Calu3 (cell line): ENCODE measurements at regions of chr5 and their contacts with region 1.

Region 1: DNA sequence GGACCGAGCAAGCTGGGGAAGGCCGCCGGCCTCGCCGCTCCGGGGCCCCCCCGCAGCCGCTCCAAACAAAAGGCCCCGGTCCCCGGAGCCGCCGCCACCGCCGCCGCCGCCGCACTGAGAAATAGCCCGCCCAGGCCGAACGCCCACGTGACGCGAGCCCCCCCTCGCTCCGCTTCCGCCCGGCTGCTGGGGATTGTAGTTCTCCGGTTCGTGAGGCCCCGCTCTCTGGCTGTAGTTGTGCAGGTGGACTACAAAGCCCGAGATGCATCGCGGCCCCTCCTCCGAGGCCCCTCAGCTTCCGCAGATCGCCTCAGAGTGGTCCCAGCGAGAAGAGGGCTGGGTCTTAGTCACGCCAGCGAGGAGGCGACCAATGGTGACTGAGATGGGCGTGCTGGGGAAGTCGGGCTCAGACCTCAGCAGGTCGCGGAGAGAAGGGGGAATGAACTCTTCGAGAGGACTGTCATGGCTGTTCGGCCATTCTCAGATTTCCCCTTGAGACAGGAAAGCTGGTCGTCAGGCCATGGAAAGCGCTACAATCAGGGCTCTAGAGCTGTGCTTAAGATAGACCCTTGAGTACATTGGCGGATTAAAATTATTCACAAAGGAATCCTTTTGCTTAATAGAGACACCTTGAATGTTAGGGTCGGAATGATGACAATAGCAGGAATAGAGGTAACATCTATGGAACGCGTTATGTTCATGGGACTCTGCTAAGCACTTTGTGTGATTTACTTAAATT is 489 bp upstream of the PANK3 start:
- DNase-seq: peak; percentile 99
- H3K4me3 Mint-ChIP-seq: peak overlapping the region; percentile 78
- H3K27ac Mint-ChIP-seq: peak overlapping the region; percentile 94
- H3K4me1 Mint-ChIP-seq: peaks cover 36% of the 10 kb centered on the region
- H3K27me3 Mint-ChIP-seq: peaks cover under 1% of the 10 kb centered on the region
- CTCF ChIP-seq: no peak

Region 2: GRCh38 chr5:168390491-168390890 is 189.2 kb before region 1 on chr5:
- CTCF ChIA-PET with region 1: no interaction called
- intact Hi-C with region 1: no loop called
- DNase-seq: no peak
- H3K4me3 Mint-ChIP-seq: no peak overlapping the region
- H3K27ac Mint-ChIP-seq: peak overlapping the region; percentile 28
- H3K4me1 Mint-ChIP-seq: peaks cover 32% of the 10 kb centered on the region
- H3K27me3 Mint-ChIP-seq: no peaks in the 10 kb centered on the region
- CTCF ChIP-seq: no peak

Region 3: DNA sequence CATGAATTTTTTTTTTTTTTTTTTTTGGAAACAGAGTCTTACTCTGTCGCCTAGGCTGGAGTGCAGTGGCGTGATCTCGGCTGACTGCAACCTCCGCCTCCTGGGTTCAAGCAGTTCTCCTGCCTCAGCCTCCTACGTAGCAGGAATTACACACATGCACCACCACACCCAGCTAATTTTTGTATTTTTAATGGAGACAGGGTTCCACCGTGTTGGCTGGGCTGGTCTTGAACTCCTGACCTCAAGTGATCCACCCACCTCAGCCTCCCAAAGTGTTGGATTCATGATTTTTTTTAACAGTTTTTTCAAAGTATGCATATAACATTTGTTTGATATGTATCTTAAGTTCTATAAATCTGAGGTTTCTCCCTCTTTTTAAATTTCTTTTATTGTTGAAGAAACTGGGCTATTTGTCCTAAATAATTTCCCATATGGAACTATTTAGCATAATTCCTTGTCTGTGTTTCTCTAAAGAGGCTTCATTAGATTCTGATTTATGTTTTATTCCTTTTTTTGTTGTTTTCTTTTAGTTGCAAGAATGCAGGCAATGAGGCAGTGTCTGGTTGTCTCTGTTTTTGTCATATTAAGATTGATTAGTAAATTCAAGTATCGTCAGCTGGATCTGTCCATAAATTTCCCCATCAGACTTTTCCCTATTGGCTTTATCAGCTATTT is 77.0 kb before region 1 on chr5:
- CTCF ChIA-PET with region 1: no interaction called
- intact Hi-C with region 1: no loop called
- DNase-seq: no peak
- H3K4me3 Mint-ChIP-seq: no peak overlapping the region
- H3K27ac Mint-ChIP-seq: no peak overlapping the region
- H3K4me1 Mint-ChIP-seq: no peaks in the 10 kb centered on the region
- H3K27me3 Mint-ChIP-seq: no peaks in the 10 kb centered on the region
- CTCF ChIP-seq: no peak

Region 4: GRCh38 chr5:168562279-168562678 is 17.4 kb before region 1 on chr5:
- CTCF ChIA-PET with region 1: interaction called, 3 read pairs
- intact Hi-C with region 1: loop called (anchors 2 kb)
- DNase-seq: no peak
- H3K4me3 Mint-ChIP-seq: no peak overlapping the region
- H3K27ac Mint-ChIP-seq: no peak overlapping the region
- H3K4me1 Mint-ChIP-seq: peaks cover 17% of the 10 kb centered on the region
- H3K27me3 Mint-ChIP-seq: no peaks in the 10 kb centered on the region
- CTCF ChIP-seq: no peak

Region 5: GRCh38 chr5:168656633-168657032 is 77.0 kb after region 1 on chr5:
- CTCF ChIA-PET with region 1: no interaction called
- intact Hi-C with region 1: loop called (anchors 1 kb)
- DNase-seq: peak; percentile 8
- H3K4me3 Mint-ChIP-seq: no peak overlapping the region
- H3K27ac Mint-ChIP-seq: peak overlapping the region; percentile 79
- H3K4me1 Mint-ChIP-seq: peaks cover 40% of the 10 kb centered on the region
- H3K27me3 Mint-ChIP-seq: no peaks in the 10 kb centered on the region
- CTCF ChIP-seq: no peak

Region 6: DNA sequence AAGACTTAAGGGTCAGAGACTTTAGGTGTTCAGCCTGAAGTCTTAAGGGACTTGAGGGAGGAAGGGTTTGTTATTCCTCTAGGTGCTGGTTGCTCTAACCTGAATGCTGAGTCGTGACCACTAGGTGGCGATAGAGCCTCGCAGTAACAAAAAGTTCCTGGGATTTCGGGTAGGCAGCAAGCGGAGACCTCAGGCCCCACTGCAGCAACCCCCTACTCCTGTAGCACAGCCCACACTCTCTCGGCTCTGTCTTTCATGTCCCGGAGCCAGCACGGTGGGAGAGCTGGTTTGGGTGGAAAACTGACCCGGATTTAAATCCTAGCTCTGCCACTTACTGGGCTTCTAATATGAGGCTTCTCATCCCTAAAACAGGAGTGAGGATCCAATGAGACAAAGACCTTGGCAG is 99.9 kb after region 1 on chr5:
- CTCF ChIA-PET with region 1: no interaction called
- intact Hi-C with region 1: loop called (anchors 5 kb)
- DNase-seq: peak; percentile 79
- H3K4me3 Mint-ChIP-seq: no peak overlapping the region
- H3K27ac Mint-ChIP-seq: no peak overlapping the region
- H3K4me1 Mint-ChIP-seq: no peaks in the 10 kb centered on the region
- H3K27me3 Mint-ChIP-seq: peaks cover 13% of the 10 kb centered on the region
- CTCF ChIP-seq: peak; percentile 96

Region 7: GRCh38 chr5:168706655-168707069 is 127.0 kb after region 1 on chr5:
- CTCF ChIA-PET with region 1: no interaction called
- intact Hi-C with region 1: no loop called
- DNase-seq: peak; percentile 66
- H3K4me3 Mint-ChIP-seq: no peak overlapping the region
- H3K27ac Mint-ChIP-seq: no peak overlapping the region
- H3K4me1 Mint-ChIP-seq: peaks cover under 1% of the 10 kb centered on the region
- H3K27me3 Mint-ChIP-seq: peaks cover 35% of the 10 kb centered on the region
- CTCF ChIP-seq: peak; percentile 18

Region 8: GRCh38 chr5:169106911-169107706 is 527.5 kb after region 1 on chr5:
- CTCF ChIA-PET with region 1: no interaction called
- intact Hi-C with region 1: no loop called
- DNase-seq: no peak
- H3K4me3 Mint-ChIP-seq: no peak overlapping the region
- H3K27ac Mint-ChIP-seq: no peak overlapping the region
- H3K4me1 Mint-ChIP-seq: no peaks in the 10 kb centered on the region
- H3K27me3 Mint-ChIP-seq: peaks cover 36% of the 10 kb centered on the region
- CTCF ChIP-seq: no peak